MCF 10A (cell line): ENCODE measurements at regions of chr16 and their contacts with region 1.

Region 1: DNA sequence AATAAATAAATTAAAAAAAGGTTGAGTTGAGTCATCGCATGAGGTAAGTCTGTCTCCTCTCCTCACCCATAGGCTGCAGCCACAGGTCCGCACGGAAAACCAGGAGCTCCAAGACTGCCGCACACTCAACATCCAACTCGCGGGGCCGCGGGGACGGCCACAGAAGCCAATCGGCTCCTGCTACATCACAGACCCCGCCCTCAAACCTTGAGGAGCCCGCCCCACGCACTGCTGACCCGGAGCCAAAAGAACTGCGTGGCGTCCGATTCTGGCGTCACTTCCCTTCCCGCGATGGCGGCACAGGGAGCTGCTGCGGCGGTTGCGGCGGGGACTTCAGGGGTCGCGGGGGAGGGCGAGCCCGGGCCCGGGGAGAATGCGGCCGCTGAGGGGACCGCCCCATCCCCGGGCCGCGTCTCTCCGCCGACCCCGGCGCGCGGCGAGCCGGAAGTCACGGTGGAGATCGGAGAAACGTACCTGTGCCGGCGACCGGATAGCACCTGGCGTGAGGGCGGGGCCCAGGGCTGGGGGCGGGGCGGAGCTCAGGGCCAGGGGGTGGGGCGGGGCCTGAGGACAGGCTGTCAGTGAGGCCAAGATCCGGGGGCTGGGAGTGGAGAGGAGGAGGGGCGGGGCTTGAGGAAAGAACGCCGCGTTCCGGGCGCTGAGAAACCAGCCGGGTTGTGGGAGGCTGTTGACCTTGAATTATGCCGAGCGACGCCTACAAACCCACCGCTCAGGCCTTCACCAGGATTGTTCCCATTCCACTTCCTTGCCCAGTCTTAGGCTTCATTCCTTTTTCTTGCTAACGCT is at the start of gene KAT8:
- DNase-seq: peak; percentile 99
- H3K4me3 Mint-ChIP-seq: peak within 1 kb of the TSS; percentile 74
- H3K27ac Mint-ChIP-seq: peak within 1 kb of the TSS; percentile 94
- H3K4me1 Mint-ChIP-seq: peaks cover 16% of the 10 kb centered on the region
- H3K27me3 Mint-ChIP-seq: no peaks in the 10 kb centered on the region
- CTCF ChIP-seq: no peak
- total RNA-seq, gene KAT8: 42.0 and 45.8 TPM in 2 replicates

Region 2: DNA sequence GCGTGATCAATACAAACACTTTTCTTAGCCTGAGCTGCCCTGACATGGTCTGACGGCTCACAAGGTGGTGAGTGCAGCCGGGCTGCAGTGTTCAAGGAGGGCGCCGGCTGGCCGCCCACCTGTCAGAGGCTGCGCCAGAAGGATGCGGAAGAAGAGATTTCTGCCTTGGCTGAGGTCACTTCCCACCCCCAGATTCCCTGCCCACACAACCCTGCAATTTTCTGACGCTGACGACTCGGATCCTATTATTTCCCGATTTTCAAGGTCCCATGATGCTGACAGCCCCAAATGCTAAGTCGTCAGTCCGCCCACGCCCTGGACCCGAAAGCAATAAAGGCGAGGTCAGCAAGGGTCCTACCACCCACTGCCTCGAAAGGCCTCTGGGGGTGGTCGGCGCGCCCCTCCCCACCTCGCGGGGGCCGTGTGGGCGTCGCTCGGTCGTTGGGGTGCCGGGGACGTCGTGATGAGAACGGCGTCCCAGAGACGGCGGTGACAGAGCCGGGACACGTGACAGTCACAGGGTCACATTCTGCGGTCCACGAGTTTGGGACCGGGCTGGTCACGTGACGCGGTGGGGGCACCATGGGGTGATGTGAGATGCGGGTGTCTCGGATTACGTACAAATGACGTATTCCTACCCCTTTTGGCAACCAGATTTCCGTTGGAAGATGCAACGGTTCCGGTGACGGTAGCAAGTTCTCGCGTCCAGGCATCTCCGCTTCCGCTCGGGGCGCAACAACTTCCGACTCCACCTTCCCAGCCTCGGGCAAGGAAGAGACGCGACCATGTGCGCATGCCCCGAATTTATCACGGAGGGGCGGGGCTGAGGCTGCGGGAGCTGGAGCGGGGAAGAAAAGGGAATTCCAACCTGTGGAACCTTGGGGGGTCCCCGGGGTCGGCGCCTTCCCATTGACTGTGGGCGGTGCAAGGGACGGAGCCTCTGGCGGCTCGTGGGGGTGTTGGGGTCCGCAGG is 84.6 kb before region 1 on chr16 and contains the start of gene STX4:
- CTCF ChIA-PET with region 1: no interaction called
- POLR2A ChIA-PET with region 1: interaction called, 14 read pairs
- intact Hi-C with region 1: no loop called
- DNase-seq: peak; percentile 96
- H3K4me3 Mint-ChIP-seq: peak within 1 kb of the TSS; percentile 91
- H3K27ac Mint-ChIP-seq: peak within 1 kb of the TSS; percentile 84
- H3K4me1 Mint-ChIP-seq: no peaks in the 10 kb centered on the region
- H3K27me3 Mint-ChIP-seq: no peaks in the 10 kb centered on the region
- CTCF ChIP-seq: no peak
- total RNA-seq, gene STX4: 66.7 and 89.2 TPM in 2 replicates

Region 3: GRCh38 chr16:31094424-31095120 is 23.0 kb before region 1 on chr16 and contains the start of gene VKORC1:
- CTCF ChIA-PET with region 1: interaction called, 3 read pairs
- POLR2A ChIA-PET with region 1: interaction called, 44 read pairs
- intact Hi-C with region 1: no loop called
- DNase-seq: peak; percentile 99
- H3K4me3 Mint-ChIP-seq: peak within 1 kb of the TSS; percentile 85
- H3K27ac Mint-ChIP-seq: peak within 1 kb of the TSS; percentile 77
- H3K4me1 Mint-ChIP-seq: peaks cover 12% of the 10 kb centered on the region
- H3K27me3 Mint-ChIP-seq: no peaks in the 10 kb centered on the region
- CTCF ChIP-seq: no peak
- total RNA-seq, gene VKORC1: 64.7 and 66.3 TPM in 2 replicates

Region 4: DNA sequence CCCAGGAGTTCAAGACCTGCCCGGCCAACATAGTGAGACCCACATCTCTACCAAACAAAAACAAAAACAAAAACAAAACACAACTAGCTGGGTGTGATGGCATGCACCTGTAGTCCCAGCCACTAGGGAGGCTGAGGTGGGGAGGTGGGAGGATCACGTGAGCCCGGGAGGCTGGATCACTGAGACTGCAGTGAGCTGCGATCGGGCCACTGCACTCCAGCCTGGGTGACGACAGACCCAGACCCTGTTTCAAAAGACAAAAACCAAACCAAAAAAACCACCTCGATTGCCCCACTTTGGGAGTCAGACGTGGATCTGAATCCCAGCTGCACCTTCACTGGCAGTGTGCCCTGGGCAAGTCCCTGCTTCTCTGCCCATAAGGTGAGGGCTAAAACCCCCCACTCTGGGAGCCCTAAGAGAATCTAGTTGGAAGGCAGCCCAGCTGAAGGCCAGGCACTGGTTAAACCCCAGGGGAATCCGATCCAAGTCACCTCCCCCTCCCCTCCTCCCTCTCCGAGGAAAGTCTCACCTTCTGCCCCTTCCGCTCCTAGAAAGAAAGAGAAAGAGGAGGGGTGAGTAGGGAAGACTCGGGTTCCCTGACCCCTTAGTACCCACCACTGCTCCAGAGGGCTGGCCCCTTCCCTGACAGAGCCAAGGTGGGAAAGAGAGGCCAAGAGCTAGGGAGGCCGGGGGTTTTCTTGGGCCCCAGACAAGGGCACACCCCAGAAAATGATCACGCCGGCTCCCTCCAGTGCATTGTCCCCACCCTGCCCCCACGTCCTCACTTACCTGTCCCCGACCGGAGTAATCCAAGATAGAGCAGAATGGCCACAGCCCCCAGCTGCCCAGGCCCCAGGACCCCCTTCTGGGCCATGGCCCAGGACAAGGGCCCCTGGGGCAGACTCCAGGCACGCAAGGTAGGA is 17.3 kb after region 1 on chr16:
- CTCF ChIA-PET with region 1: interaction called, 25 read pairs
- POLR2A ChIA-PET with region 1: interaction called, 201 read pairs
- intact Hi-C with region 1: loop called (anchors 1 kb)
- DNase-seq: peak; percentile 88
- H3K4me3 Mint-ChIP-seq: peak overlapping the region; percentile 85
- H3K27ac Mint-ChIP-seq: peak overlapping the region; percentile 6
- H3K4me1 Mint-ChIP-seq: peaks cover 28% of the 10 kb centered on the region
- H3K27me3 Mint-ChIP-seq: no peaks in the 10 kb centered on the region
- CTCF ChIP-seq: no peak

Region 5: DNA sequence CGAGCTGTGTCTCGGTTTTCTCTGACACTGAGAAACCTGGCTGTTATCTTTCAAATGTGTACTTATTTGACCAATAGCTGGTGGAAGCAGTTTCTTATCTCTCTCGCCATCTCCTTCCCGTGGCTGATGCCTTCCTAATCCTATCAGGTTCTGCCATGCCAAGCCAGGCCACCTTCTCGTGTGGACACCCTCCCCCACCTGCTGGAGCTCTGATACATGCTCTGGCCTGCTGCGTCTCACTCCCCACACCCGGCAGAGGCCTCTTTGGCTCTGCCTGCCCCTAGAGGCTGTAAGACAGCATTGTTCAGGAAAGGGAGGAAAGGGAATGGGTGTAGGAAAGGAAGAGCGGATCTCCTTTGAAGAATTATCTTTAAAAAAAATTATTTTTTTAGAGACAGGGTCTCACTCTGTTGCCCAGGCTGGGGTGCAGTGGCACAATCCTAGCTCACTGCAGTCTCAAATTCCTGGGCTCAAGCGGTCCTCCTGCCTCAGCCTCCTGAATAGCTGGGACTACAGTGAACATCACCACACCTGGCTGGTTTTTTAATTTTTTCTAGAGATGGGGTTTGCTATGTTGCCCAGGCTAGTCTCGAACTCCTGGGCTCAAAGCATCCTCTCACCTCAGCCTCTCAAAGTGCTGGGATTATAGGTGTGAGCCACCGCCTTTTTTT is 334.2 kb after region 1 on chr16:
- CTCF ChIA-PET with region 1: no interaction called
- POLR2A ChIA-PET with region 1: interaction called, 28 read pairs
- intact Hi-C with region 1: no loop called
- DNase-seq: peak; percentile 77
- H3K4me3 Mint-ChIP-seq: peak overlapping the region; percentile 12
- H3K27ac Mint-ChIP-seq: peak overlapping the region; percentile 94
- H3K4me1 Mint-ChIP-seq: peaks cover 21% of the 10 kb centered on the region
- H3K27me3 Mint-ChIP-seq: no peaks in the 10 kb centered on the region
- CTCF ChIP-seq: peak; percentile 48